Naive thymus-derived CD4-positive, alpha-beta T cell (primary cell): ENCODE measurements at regions of chr3 and their contacts with region 1.

Region 1: DNA sequence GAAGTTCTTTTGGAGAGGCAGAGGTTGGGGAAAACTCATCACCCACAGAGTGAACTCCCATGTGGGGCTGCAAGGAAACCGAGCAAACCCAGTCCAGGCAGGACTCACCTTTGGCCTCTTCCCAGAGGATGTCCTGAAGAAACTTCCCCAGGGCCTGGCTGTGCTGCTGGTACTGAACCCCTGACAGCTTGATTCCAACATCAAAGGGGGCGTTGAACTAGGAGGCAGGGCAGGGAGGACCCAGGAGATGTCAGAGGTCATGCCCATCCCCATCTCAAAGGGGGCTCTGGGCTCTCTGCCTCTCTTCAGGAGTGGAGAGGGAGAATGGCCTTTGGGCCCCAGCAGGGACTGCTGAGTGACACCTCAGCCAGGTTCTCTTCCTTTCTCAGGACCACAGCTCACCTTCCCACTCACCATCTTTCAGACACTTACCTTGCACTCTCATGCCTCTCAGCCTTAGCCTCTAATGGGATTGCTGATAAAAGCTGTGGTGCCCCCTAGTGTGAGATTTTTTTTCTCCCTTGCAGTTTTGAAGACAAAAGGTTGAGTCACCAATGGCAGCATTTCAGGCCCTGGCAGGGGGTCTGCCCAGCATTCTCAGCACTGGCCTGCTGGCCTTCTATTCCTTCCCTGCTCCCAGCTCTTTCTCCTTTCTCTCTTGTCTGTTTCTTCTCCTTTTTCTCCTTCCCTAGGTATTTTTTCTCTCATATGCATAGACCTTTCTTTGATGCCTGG is 6.0 kb downstream of the GHRL start:
- DNase-seq: peak in 5 of 9 donors; percentile 37 to 74 (median 50)
- ATAC-seq: peak; percentile 47
- H3K4me3 ChIP-seq: no peak overlapping the region
- H3K4me3 Mint-ChIP-seq: no peak overlapping the region
- H3K27ac ChIP-seq: no peak overlapping the region
- H3K27ac Mint-ChIP-seq: peak overlapping the region in 7 of 9 donors; percentile 12 to 75 (median 44)
- H3K4me1 ChIP-seq: peaks cover 12 to 13% of the 10 kb centered on the region in 2 donors
- H3K4me1 Mint-ChIP-seq: peaks cover 7 to 39% (median 28%) of the 10 kb centered on the region in 7 donors
- H3K27me3 ChIP-seq: no peaks in the 10 kb centered on the region
- H3K27me3 Mint-ChIP-seq: no peaks in the 10 kb centered on the region

Region 2: DNA sequence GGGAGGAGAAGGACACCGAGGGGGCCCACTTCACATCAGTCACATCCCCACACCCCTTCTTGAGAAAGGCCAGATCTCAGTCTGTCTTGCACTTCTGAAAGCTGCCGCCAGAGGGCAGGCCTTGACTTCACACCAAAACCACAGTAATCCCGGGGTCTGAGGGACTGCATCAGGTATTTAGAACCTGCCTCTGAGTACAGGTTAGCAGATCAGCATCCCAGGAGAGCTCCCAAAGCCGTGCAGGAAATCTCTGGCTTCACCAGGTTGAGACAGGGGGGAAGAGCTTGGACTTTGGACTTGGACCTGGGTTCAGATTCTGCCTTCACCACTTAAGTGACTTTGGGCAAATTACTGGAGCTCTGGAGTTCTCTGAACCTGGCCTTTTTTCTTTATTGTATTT is 783.5 kb before region 1 on chr3:
- CTCF ChIA-PET with region 1: no interaction called
- POLR2A ChIA-PET with region 1: no interaction called
- intact Hi-C with region 1: loop called in 1 of 2 experiments (anchors 10 kb)
- DNase-seq: peak; percentile 38 to 71 (median 60)
- ATAC-seq: peak; percentile 71
- H3K4me3 ChIP-seq: no peak overlapping the region
- H3K4me3 Mint-ChIP-seq: no peak overlapping the region
- H3K27ac ChIP-seq: no peak overlapping the region
- H3K27ac Mint-ChIP-seq: no peak overlapping the region
- H3K4me1 ChIP-seq: peaks cover 7 to 11% of the 10 kb centered on the region in 2 donors
- H3K4me1 Mint-ChIP-seq: peaks cover 0 to 9% (median 5%) of the 10 kb centered on the region in 7 donors
- H3K27me3 ChIP-seq: peaks cover 5 to 15% of the 10 kb centered on the region in 2 donors
- H3K27me3 Mint-ChIP-seq: peaks cover 28 to 44% (median 34%) of the 10 kb centered on the region in 5 donors

Region 3: GRCh38 chr3:9779721-9780457 is 506.9 kb before region 1 on chr3:
- CTCF ChIA-PET with region 1: no interaction called
- POLR2A ChIA-PET with region 1: no interaction called
- intact Hi-C with region 1: loop called in 1 of 2 experiments (anchors 2 kb)
- DNase-seq: peak in 7 of 9 donors; percentile 21 to 48 (median 38)
- ATAC-seq: peak; percentile 80
- H3K4me3 ChIP-seq: peak overlapping the region; percentile 23
- H3K4me3 Mint-ChIP-seq: peak overlapping the region; percentile 41 to 82 (median 72)
- H3K27ac ChIP-seq: peak overlapping the region; percentile 5
- H3K27ac Mint-ChIP-seq: peak overlapping the region; percentile 1 to 90 (median 72)
- H3K4me1 ChIP-seq: peaks cover 33 to 39% of the 10 kb centered on the region in 2 donors
- H3K4me1 Mint-ChIP-seq: peaks cover 43 to 63% (median 57%) of the 10 kb centered on the region in 7 donors
- H3K27me3 ChIP-seq: no peaks in the 10 kb centered on the region
- H3K27me3 Mint-ChIP-seq: no peaks in the 10 kb centered on the region

Region 4: GRCh38 chr3:10164546-10165393 is 122.0 kb before region 1 on chr3 and contains the start of gene IRAK2:
- CTCF ChIA-PET with region 1: no interaction called
- POLR2A ChIA-PET with region 1: no interaction called
- intact Hi-C with region 1: loop called in 1 of 2 experiments (anchors 1 kb)
- DNase-seq: peak; percentile 25 to 75 (median 57)
- ATAC-seq: peak; percentile 92
- H3K4me3 ChIP-seq: peak within 1 kb of the TSS; percentile 85
- H3K4me3 Mint-ChIP-seq: peak within 1 kb of the TSS; percentile 79 to 94 (median 86)
- H3K27ac ChIP-seq: peak within 1 kb of the TSS; percentile 68
- H3K27ac Mint-ChIP-seq: peak within 1 kb of the TSS; percentile 2 to 89 (median 68)
- H3K4me1 ChIP-seq: peaks cover 5 to 9% of the 10 kb centered on the region in 2 donors
- H3K4me1 Mint-ChIP-seq: peaks cover 12 to 37% (median 25%) of the 10 kb centered on the region in 7 donors
- H3K27me3 ChIP-seq: no peaks in the 10 kb centered on the region
- H3K27me3 Mint-ChIP-seq: no peaks in the 10 kb centered on the region
- total RNA-seq, gene IRAK2: 1.5 to 4.8 (median 2.3) TPM